ENCODE measurements at regions of chr12 and their contacts with region 1.

Region 1: GRCh38 chr12:68317047-68317667 is 15.0 kb downstream of the MDM1 start:
- DNase-seq: no peak
- H3K4me3 ChIP-seq: no peak overlapping the region
- CTCF ChIP-seq: peak; percentile 33

Region 2: DNA sequence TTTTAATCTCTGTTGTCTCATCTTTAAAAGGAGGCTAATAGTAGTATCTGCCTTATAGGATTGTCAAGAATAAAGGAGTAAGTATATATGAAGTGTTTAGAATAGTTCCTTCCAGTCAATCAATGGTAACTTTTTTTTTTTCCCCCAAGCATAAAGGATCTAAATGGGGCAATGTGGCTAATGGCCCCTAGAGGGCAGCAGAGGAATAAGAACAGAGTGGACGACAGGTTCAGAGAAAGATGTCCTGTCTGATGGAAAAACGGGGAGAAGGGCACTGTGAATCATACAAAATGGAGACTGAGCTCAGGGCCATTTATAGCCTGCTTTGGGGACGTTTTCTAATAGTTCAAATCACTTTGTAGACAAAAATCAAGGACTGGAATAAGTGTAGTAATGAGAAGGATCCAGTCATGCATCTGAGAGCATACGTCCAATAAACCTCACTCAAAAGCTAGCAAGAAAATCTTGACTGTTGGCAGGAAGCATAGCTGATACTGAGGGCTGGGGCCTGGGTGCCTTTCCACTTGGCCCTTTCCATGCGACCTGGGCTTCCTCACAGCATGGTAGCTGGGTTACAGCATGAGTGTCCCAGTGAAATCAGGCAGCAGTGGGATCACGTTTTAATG is 276.6 kb before region 1 on chr12:
- CTCF ChIA-PET with region 1: interaction called, 23 read pairs
- POLR2A ChIA-PET with region 1: no interaction called
- DNase-seq: peak; percentile 23
- H3K4me3 ChIP-seq: no peak overlapping the region
- CTCF ChIP-seq: peak; percentile 63

Region 3: GRCh38 chr12:68210875-68211274 is 106.3 kb before region 1 on chr12:
- CTCF ChIA-PET with region 1: interaction called, 21 read pairs
- POLR2A ChIA-PET with region 1: no interaction called
- DNase-seq: no peak
- H3K4me3 ChIP-seq: no peak overlapping the region
- CTCF ChIP-seq: no peak

Region 4: DNA sequence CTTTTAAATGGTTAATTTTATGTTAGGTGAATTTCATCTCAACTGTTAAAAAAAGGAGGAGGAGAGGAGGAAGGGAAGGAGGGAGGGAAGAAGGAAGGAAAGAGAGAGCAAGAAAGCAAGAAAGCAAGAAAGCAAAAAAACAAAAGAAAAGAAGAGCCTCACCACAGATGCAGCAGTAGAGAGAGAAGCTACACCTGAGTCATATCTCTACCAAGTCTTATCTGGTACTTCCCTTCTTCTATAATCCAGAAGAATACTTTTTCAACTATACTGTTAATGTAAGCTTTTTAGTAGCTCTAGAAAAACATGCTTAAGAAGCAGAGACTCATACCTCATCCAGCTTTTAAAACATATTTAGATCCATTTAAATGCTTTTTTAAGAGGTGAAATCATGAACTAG is 85.9 kb before region 1 on chr12:
- CTCF ChIA-PET with region 1: interaction called, 212 read pairs
- POLR2A ChIA-PET with region 1: no interaction called
- DNase-seq: no peak
- H3K4me3 ChIP-seq: no peak overlapping the region
- CTCF ChIP-seq: no peak

Region 5: GRCh38 chr12:68236421-68237059 is 80.6 kb before region 1 on chr12:
- CTCF ChIA-PET with region 1: interaction called, 42 read pairs
- POLR2A ChIA-PET with region 1: no interaction called
- DNase-seq: no peak
- H3K4me3 ChIP-seq: no peak overlapping the region
- CTCF ChIP-seq: no peak

Region 6: GRCh38 chr12:68297929-68298328 is 19.2 kb before region 1 on chr12:
- CTCF ChIA-PET with region 1: interaction called, 16 read pairs
- POLR2A ChIA-PET with region 1: no interaction called
- DNase-seq: no peak
- H3K4me3 ChIP-seq: no peak overlapping the region
- CTCF ChIP-seq: no peak

Region 7: DNA sequence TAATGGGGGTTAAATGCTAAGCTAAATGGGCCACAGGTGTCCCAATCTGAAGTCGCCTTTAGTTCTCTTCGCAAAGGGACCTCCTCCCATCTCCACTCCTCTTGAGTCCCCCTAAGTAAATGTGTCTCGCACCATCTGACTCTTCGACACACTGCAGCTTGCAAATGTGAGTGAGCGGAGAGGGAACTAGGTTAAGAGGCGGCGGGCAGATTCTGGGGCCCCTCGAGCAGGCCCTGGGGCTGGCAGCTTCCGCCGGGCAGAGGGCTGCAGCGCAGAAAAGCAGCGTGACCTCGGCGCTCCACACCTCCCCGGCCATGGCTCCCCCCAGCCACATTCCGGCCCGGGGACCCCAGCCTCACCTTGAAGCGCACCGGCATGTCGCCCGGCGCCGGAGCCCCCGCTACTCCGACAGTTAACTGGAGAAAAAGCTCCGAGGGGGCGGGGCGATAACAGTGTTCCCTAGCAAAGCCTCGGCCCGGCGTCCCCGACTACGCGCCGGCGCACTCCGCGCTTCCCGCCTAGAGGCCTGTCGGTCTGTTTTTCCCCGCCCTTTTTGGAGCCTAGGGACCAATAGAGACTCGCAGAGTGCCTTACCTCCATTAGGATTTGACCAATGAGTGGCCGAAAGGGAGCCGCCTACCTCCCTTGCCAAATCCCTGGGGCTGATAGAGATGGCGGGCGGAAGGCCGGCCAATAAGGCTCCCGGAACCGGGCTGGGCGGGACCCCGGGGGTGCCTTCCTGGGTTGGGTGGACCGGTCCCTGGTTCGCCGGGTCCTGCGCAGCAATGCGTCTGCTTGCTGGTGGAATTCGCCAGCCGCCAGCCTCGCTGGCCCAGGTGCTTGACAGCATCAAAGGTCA is 14.9 kb after region 1 on chr12 and contains the start of gene MDM1:
- CTCF ChIA-PET with region 1: interaction called, 29 read pairs
- POLR2A ChIA-PET with region 1: no interaction called
- DNase-seq: peak; percentile 84
- H3K4me3 ChIP-seq: peak within 1 kb of the TSS; percentile 74
- CTCF ChIP-seq: no peak

Region 8: GRCh38 chr12:68387338-68387737 is 70.2 kb after region 1 on chr12:
- CTCF ChIA-PET with region 1: no interaction called
- POLR2A ChIA-PET with region 1: no interaction called
- DNase-seq: no peak
- H3K4me3 ChIP-seq: no peak overlapping the region
- CTCF ChIP-seq: no peak